ENCODE measurements at regions of chr2 and their contacts with region 1.

Region 1: GRCh38 chr2:107931412-107931811 is 54.9 kb upstream of the SLC5A7 start:
- DNase-seq: no peak
- H3K4me3 ChIP-seq: no peak overlapping the region
- H3K27ac ChIP-seq: no peak overlapping the region
- H3K4me1 ChIP-seq: no peaks in the 10 kb centered on the region
- H3K27me3 ChIP-seq: peaks cover 25% of the 10 kb centered on the region
- CTCF ChIP-seq: no peak

Region 2: GRCh38 chr2:107687073-107687472 is 244.3 kb before region 1 on chr2:
- CTCF ChIA-PET with region 1: no interaction called
- POLR2A ChIA-PET with region 1: no interaction called
- intact Hi-C with region 1: no loop called
- DNase-seq: no peak
- H3K4me3 ChIP-seq: no peak overlapping the region
- H3K27ac ChIP-seq: no peak overlapping the region
- H3K4me1 ChIP-seq: no peaks in the 10 kb centered on the region
- H3K27me3 ChIP-seq: peaks cover 45% of the 10 kb centered on the region
- CTCF ChIP-seq: no peak

Region 3: GRCh38 chr2:108810993-108811957 is 879.9 kb after region 1 on chr2:
- CTCF ChIA-PET with region 1: interaction called, 12 read pairs
- POLR2A ChIA-PET with region 1: no interaction called
- intact Hi-C with region 1: no loop called
- DNase-seq: no peak
- H3K4me3 ChIP-seq: no peak overlapping the region
- H3K27ac ChIP-seq: no peak overlapping the region
- H3K4me1 ChIP-seq: no peaks in the 10 kb centered on the region
- H3K27me3 ChIP-seq: no peaks in the 10 kb centered on the region
- CTCF ChIP-seq: no peak

Measured in PC-9 (cell line).